ENCODE measurements at regions of chr16 and their contacts with region 1.

Region 1: DNA sequence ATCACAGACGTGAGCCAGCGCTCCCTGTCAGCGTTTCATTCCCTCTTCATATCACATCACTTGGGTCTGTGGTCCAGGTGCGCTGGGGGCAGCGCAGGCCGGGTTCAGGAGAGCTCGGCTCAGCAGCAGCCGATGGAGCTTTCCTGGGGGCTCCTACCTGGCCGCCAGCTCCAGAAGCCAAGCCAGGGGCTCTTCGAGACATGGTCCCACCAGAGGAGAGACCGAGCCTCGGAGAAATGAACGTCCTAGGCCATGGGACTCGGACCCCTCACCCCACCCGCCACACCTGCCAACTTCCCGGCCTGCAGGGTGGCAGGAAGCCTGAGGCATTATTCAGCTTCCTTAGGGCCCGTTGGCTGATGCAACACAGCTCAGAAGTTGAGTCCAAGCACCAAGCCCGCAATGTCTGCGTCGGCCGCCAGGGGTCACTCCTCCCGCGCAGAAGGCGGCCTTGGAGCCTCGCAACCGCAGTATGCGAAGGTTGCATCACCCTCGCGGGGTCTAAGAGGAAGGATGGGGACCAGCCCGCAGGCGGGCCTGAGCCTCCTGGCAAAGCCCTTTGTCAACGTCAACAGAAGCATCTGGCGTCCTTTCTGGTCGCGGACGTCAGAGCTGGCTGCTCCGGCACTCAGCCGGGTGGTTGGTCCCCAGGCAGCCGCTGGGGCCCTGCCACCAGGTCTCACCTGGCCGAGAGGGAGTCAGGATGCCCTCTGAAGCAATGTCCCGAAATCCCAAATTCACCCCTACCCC is 13.2 kb upstream of the KLHDC4 start:
- DNase-seq: peak; percentile 94
- H3K4me3 Mint-ChIP-seq: peak overlapping the region; percentile 12
- H3K27ac Mint-ChIP-seq: peak overlapping the region; percentile 95
- H3K4me1 Mint-ChIP-seq: peaks cover 55% of the 10 kb centered on the region
- H3K27me3 Mint-ChIP-seq: no peaks in the 10 kb centered on the region

Region 2: GRCh38 chr16:87653234-87653633 is 125.8 kb before region 1 on chr16:
- CTCF ChIA-PET with region 1: no interaction called
- POLR2A ChIA-PET with region 1: no interaction called
- DNase-seq: no peak
- H3K4me3 Mint-ChIP-seq: no peak overlapping the region
- H3K27ac Mint-ChIP-seq: no peak overlapping the region
- H3K4me1 Mint-ChIP-seq: no peaks in the 10 kb centered on the region
- H3K27me3 Mint-ChIP-seq: peaks cover 4% of the 10 kb centered on the region

Region 3: DNA sequence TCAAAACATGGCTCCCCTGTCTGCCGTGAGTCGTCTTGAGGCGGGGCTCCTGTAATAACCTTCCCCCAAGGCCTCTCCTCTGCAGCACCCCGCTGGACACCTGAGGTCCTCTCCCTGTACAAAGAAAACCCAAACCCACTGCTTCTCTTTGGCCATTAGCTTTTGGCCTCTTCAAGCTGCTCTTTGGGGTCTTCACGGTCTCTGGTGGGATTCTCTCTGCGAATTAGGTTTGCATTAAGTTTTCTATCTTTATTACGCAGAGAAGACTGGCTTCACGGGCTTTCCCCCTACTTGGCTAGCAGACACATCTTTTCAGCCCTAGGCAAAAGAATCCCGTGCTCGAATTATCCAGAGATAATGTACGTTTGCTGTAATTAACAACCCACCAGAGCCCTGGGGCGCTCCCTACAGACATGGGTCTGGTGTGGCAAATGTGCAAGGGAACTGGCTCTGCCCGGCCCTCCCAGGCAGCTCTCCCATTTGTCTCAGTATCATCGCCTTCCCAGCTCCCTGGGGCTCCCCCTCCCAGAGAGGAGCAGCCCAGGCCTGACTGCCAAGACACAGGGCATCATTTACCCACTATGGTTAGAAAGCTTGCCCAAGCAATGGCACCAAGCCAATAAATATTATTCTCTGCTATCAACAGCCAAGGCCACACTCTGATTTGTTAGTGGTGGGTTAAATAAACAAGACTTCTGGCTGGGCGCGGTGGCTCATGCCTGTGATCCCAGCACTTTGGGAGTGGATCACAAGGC is 11.4 kb after region 1 on chr16:
- CTCF ChIA-PET with region 1: interaction called, 65 read pairs
- POLR2A ChIA-PET with region 1: no interaction called
- DNase-seq: no peak
- H3K4me3 Mint-ChIP-seq: no peak overlapping the region
- H3K27ac Mint-ChIP-seq: no peak overlapping the region
- H3K4me1 Mint-ChIP-seq: no peaks in the 10 kb centered on the region
- H3K27me3 Mint-ChIP-seq: no peaks in the 10 kb centered on the region

Region 4: DNA sequence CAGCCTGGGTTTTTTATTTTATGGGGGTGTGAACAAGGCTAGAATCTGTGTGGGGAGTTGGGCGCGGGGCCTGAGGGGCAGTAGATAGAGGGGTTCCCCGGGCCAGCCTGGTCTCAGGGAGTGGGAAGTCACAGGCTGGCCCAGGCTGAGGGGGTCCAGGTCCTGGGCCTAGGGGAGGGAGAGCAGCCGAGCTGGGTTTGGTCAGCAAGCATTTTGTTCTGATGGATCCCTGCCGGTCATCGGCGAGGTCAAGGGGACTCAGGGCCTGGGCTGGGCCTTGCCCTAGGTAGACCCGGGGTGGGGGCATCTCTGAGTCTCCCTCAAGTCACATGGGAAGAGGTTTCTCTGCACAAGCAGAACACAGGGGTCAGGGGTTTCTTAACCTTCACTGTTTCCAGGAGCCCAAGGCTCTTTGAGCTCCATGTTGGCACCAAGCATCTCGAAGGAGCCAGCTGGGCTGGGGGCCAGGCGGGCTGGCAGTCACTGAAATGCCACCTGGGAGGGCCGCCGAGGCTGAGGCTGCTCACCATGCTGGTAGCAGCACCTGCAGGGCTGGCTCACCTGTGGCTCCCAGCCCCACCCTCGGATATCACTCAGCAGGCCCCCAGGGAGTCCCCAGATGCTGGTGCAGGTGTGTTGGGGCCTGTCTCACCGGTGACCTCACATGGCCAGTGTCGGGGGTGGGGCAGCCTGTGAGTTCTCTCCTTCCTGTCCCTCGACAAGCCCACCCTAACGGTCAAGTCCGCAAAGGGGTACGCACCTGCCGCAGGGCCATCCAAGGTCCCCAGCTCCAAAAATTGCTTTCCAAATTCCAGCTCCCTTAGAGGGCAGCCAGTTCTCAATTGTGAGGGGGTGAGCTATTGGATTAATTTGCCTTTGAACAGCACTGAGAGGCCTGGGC is 49.3 kb after region 1 on chr16:
- CTCF ChIA-PET with region 1: interaction called, 17 read pairs
- POLR2A ChIA-PET with region 1: no interaction called
- DNase-seq: no peak
- H3K4me3 Mint-ChIP-seq: no peak overlapping the region
- H3K27ac Mint-ChIP-seq: peak overlapping the region; percentile 41
- H3K4me1 Mint-ChIP-seq: no peaks in the 10 kb centered on the region
- H3K27me3 Mint-ChIP-seq: no peaks in the 10 kb centered on the region

Region 5: DNA sequence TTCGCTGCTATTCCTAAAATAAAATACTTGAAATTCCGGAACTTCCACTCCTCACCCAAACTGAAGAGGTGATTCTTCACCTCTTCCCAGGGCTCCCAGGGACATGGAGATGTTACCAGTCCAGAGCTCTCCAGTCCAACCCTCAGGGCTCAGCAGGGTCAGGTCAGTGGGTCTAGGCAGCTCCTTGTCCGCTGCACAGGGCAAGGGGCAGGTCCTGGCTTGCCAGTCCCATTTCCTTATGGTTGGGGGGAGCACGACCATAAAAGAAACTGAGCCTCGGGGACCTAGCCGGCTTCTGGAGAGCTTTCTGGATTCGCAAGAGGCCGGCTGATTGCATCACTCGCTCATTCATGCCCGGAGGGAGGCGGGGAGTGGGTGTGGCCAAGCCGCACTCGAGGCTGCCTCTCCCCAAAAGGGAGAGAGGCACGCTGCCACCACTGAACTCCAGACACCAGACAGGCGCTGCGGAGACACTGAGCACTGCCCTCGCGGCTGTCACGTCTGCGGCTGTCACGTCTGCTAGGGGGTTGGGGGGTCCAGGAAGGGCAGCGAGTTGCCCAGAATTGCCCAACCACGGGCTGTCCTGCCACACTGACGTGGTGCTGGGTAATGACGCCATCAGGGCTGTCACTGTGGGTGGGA is 74.5 kb after region 1 on chr16:
- CTCF ChIA-PET with region 1: interaction called, 48 read pairs
- POLR2A ChIA-PET with region 1: no interaction called
- DNase-seq: peak; percentile 94
- H3K4me3 Mint-ChIP-seq: peak overlapping the region; percentile 61
- H3K27ac Mint-ChIP-seq: peak overlapping the region; percentile 94
- H3K4me1 Mint-ChIP-seq: peaks cover 69% of the 10 kb centered on the region
- H3K27me3 Mint-ChIP-seq: no peaks in the 10 kb centered on the region

Region 6: GRCh38 chr16:87895641-87896141 is 116.7 kb after region 1 on chr16:
- CTCF ChIA-PET with region 1: interaction called, 39 read pairs
- POLR2A ChIA-PET with region 1: interaction called, 3 read pairs
- DNase-seq: peak; percentile 83
- H3K4me3 Mint-ChIP-seq: peak overlapping the region; percentile 53
- H3K27ac Mint-ChIP-seq: peak overlapping the region; percentile 98
- H3K4me1 Mint-ChIP-seq: peaks cover 57% of the 10 kb centered on the region
- H3K27me3 Mint-ChIP-seq: no peaks in the 10 kb centered on the region

Region 7: DNA sequence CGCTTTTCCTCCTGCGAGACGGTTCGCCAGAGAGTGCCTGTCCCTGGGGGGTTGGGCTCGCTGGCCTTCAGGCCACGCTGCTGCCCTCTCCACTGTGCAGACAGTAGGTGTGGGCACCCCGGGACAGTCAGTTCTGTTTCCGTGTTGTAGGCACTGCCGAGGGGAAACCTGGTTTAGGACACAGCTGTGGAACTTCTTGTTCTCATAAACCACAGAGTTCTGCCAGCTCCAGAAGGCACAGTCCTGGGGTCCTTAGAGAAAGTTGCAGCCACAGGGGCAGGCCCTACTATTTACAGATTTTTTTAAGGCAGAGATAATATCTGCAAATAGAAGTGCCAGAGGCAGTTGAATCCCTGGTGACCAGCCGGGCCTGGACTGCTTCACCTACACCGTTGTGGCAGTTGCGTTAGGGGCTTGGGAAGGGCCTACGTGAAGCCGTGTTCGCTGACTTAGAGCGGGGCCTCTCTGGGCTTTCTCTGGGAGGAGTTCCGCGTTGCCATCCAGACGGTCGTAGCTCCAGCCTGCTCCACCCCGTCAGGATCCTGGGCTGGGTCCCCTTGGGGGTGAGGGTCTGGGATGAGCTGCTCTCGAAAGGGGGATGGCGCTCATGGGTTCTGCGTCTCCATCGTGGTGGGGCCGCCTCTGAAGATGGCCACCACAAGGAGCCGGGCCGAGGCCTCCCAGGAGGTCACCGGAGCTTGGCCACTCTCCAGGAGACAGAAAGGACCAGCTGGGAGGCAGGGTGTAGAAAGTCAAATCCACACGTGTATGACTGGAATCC is 298.5 kb after region 1 on chr16:
- CTCF ChIA-PET with region 1: no interaction called
- POLR2A ChIA-PET with region 1: no interaction called
- DNase-seq: no peak
- H3K4me3 Mint-ChIP-seq: no peak overlapping the region
- H3K27ac Mint-ChIP-seq: no peak overlapping the region
- H3K4me1 Mint-ChIP-seq: no peaks in the 10 kb centered on the region
- H3K27me3 Mint-ChIP-seq: no peaks in the 10 kb centered on the region

Measured in activated CD4-positive, alpha-beta T cell treated with anti-CD3 and anti-CD28 coated beads, Interleukin-2, amount 10 ng/mL, durations not matched to agents 7 days and 5 days (primary cell).